ENCODE measurements at regions of chr1 and their contacts with region 1.

Region 1: DNA sequence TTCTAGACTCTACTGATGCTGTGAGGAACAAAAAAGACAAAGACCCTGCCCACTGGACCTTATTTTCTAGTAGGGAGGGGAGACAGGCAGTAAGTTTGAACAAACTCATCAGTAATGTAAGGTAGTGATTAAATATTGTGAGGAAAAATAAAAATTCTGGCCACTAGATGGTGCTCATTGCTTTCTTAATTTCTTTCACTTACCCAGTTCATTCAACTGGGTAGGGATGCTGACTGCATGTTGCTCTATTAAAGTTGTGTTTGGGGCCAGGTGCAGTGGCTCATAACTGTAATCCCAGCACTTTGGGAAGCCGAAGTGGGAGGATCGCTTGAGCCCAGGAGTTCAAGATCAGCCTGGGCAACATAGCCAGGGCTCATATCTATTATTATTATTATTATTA is 6.3 kb upstream of the KYAT3 start:
- DNase-seq: peak; percentile 46
- ATAC-seq: peak; percentile 88
- H3K4me3 Mint-ChIP-seq: no peak overlapping the region
- H3K27ac Mint-ChIP-seq: no peak overlapping the region
- H3K4me1 Mint-ChIP-seq: peaks cover 28% of the 10 kb centered on the region
- H3K27me3 Mint-ChIP-seq: no peaks in the 10 kb centered on the region

Region 2: GRCh38 chr1:88736639-88737248 is 262.0 kb before region 1 on chr1:
- CTCF ChIA-PET with region 1: no interaction called
- POLR2A ChIA-PET with region 1: no interaction called
- DNase-seq: peak; percentile 44
- ATAC-seq: peak; percentile 51
- H3K4me3 Mint-ChIP-seq: no peak overlapping the region
- H3K27ac Mint-ChIP-seq: no peak overlapping the region
- H3K4me1 Mint-ChIP-seq: peaks cover 7% of the 10 kb centered on the region
- H3K27me3 Mint-ChIP-seq: no peaks in the 10 kb centered on the region

Region 3: DNA sequence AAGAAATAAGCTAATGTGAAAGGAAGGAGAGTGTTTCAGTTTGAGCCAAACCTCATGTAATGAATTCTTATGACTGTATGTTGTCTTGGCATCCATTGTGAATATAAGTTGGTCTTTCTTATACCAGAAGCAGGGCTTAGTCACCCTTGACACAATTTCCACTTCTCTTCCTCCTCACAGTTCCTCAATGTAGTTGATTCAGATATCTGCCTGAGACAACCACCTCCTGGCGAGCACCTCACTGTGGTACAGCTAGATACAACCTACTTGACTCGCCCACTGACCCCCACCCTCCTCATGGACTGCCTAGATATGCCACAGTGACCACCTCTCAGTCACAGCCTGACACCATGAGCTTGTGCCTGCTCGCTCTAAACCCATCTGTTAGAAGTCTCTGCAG is 51.9 kb before region 1 on chr1:
- CTCF ChIA-PET with region 1: no interaction called
- POLR2A ChIA-PET with region 1: no interaction called
- DNase-seq: no peak
- ATAC-seq: no peak
- H3K4me3 Mint-ChIP-seq: no peak overlapping the region
- H3K27ac Mint-ChIP-seq: peak overlapping the region; percentile 26
- H3K4me1 Mint-ChIP-seq: no peaks in the 10 kb centered on the region
- H3K27me3 Mint-ChIP-seq: no peaks in the 10 kb centered on the region

Region 4: GRCh38 chr1:88961647-88962275 is 37.0 kb before region 1 on chr1:
- CTCF ChIA-PET with region 1: no interaction called
- POLR2A ChIA-PET with region 1: no interaction called
- DNase-seq: no peak
- ATAC-seq: no peak
- H3K4me3 Mint-ChIP-seq: no peak overlapping the region
- H3K27ac Mint-ChIP-seq: no peak overlapping the region
- H3K4me1 Mint-ChIP-seq: no peaks in the 10 kb centered on the region
- H3K27me3 Mint-ChIP-seq: no peaks in the 10 kb centered on the region

Region 5: GRCh38 chr1:88983791-88984559 is 14.7 kb before region 1 on chr1:
- CTCF ChIA-PET with region 1: interaction called, 30 read pairs
- POLR2A ChIA-PET with region 1: interaction called, 3 read pairs
- DNase-seq: peak; percentile 43
- ATAC-seq: peak; percentile 76
- H3K4me3 Mint-ChIP-seq: peak overlapping the region; percentile 48
- H3K27ac Mint-ChIP-seq: peak overlapping the region; percentile 56
- H3K4me1 Mint-ChIP-seq: peaks cover 69% of the 10 kb centered on the region
- H3K27me3 Mint-ChIP-seq: no peaks in the 10 kb centered on the region

Region 6: DNA sequence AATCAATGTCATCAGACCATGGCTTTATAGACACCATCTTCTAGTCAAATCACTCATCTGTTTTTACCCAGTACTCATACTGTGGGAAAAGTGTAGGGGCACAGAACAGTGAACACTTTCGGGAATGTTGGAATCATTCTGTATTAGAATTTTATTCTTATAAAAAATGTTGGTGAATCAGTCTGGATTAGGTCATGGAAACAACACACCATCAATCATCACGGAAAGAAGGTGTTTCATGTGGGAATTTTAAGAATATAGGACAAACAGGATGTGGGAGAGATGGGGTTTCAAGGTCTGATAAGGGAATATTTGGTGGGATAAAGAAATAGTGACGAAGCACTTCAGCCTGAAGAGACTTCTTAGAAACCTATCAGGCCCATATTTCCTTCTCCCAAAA is 49.0 kb after region 1 on chr1:
- CTCF ChIA-PET with region 1: no interaction called
- POLR2A ChIA-PET with region 1: no interaction called
- DNase-seq: no peak
- ATAC-seq: no peak
- H3K4me3 Mint-ChIP-seq: no peak overlapping the region
- H3K27ac Mint-ChIP-seq: peak overlapping the region; percentile 47
- H3K4me1 Mint-ChIP-seq: peaks cover 5% of the 10 kb centered on the region
- H3K27me3 Mint-ChIP-seq: no peaks in the 10 kb centered on the region